HepG2 (cell line): ENCODE measurements at regions of chr3 and their contacts with region 1.

Region 1: DNA sequence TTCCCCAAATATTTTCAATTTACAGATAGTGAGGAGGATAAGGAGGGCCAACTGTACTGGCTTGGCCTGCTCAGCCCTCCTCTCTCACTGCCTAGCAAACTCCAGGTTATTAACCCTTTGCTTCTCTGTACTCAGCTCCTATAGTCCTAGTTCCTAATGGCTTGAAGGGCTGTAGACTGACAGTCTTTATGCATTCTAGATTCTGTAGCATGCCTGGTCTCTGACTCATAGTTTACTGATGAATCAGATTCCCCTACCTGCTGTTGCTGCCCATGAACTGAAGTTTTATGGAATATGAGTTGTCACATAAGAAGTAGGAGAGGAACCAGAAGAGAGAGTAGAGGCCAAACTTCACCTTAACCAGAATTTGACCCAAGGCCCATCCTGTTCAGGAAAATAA is 27.1 kb upstream of the MAP3K13 start:
- DNase-seq: peak; percentile 86
- ATAC-seq: peak; percentile 88
- H3K4me3 ChIP-seq: no peak overlapping the region
- H3K27ac ChIP-seq: peak overlapping the region; percentile 36
- H3K4me1 ChIP-seq: peaks cover 63% of the 10 kb centered on the region
- H3K27me3 ChIP-seq: no peaks in the 10 kb centered on the region
- CTCF ChIP-seq: no peak
- EP300 ChIP-seq: peak in 1 of 2 experiments; percentile 49; a peak in 1 of 4 replicates
- POLR2A ChIP-seq: no peak
- RAD21 ChIP-seq: no peak

Region 2: DNA sequence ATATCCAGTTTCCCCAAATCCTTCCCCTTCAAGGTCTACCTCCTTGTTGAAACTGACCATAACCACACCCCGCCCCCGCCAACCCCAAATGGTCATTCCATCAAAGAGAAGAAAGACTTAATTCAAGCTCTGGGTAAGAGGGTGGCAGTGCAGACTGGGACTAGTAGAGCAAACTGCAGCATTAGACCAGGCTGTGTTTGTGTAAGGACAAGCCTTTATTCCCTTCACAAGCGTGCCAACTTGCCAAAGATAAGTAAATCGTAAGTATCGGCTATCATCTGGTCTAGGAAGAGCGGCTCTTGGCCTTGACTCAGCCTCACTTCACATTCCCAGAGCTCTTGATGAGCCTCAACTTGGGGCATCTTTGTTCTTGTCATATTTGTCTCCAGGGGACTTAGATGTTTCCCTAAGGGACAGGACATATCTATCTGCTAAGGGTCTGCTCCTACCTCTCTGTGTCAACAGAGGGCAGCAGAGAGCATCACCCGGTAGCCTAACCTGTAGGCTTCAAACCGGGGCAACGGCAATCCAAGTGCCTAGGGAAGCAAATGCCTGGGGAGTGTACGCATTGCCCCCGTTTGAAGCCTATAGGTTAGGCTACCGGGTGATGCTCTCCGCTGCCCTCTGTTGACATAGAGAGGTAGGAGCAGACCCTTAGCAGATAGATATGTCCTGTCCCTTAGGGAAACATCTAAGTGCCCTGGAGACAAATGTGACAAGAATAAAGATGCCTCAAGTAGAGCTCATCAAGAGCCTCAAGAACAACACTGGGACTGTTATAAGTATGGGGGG is 18.2 kb after region 1 on chr3:
- CTCF ChIA-PET with region 1: no interaction called
- POLR2A ChIA-PET with region 1: no interaction called
- in situ Hi-C with region 1: no loop called
- intact Hi-C with region 1: loop called (anchors 1 kb)
- DNase-seq: peak; percentile 86
- ATAC-seq: peak; percentile 99
- H3K4me3 ChIP-seq: no peak overlapping the region
- H3K27ac ChIP-seq: no peak overlapping the region
- H3K4me1 ChIP-seq: no peaks in the 10 kb centered on the region
- H3K27me3 ChIP-seq: no peaks in the 10 kb centered on the region
- CTCF ChIP-seq: peak; percentile 75
- EP300 ChIP-seq: no peak
- POLR2A ChIP-seq: no peak
- RAD21 ChIP-seq: peak; percentile 69